ENCODE measurements at regions of chr1 and their contacts with region 1.

Region 1: GRCh38 chr1:21355956-21356355 is 65.7 kb upstream of the ECE1 start:
- DNase-seq: peak; percentile 36 to 37
- H3K4me3 ChIP-seq: no peak overlapping the region
- H3K27ac ChIP-seq: no peak overlapping the region
- H3K4me1 ChIP-seq: no peaks in the 10 kb centered on the region
- H3K27me3 ChIP-seq: no peaks in the 10 kb centered on the region
- CTCF ChIP-seq: no peak

Region 2: GRCh38 chr1:21255278-21255942 is 100.5 kb before region 1 on chr1:
- CTCF ChIA-PET with region 1: no interaction called
- POLR2A ChIA-PET with region 1: interaction called, 12 read pairs
- intact Hi-C with region 1: no loop called
- DNase-seq: peak; percentile 42 to 75
- H3K4me3 ChIP-seq: no peak overlapping the region
- H3K27ac ChIP-seq: no peak overlapping the region
- H3K4me1 ChIP-seq: peaks cover 20% of the 10 kb centered on the region
- H3K27me3 ChIP-seq: no peaks in the 10 kb centered on the region
- CTCF ChIP-seq: peak; percentile 77

Region 3: GRCh38 chr1:21344750-21345443 is 11.1 kb before region 1 on chr1:
- CTCF ChIA-PET with region 1: no interaction called
- POLR2A ChIA-PET with region 1: interaction called, 17 read pairs
- intact Hi-C with region 1: no loop called
- DNase-seq: no peak
- H3K4me3 ChIP-seq: peak overlapping the region; percentile 68
- H3K27ac ChIP-seq: no peak overlapping the region
- H3K4me1 ChIP-seq: peaks cover 23% of the 10 kb centered on the region
- H3K27me3 ChIP-seq: no peaks in the 10 kb centered on the region
- CTCF ChIP-seq: no peak

Region 4: GRCh38 chr1:22527555-22528296 is 1171.8 kb after region 1 on chr1:
- CTCF ChIA-PET with region 1: no interaction called
- POLR2A ChIA-PET with region 1: interaction called, 13 read pairs
- intact Hi-C with region 1: no loop called
- DNase-seq: no peak
- H3K4me3 ChIP-seq: no peak overlapping the region
- H3K27ac ChIP-seq: no peak overlapping the region
- H3K4me1 ChIP-seq: no peaks in the 10 kb centered on the region
- H3K27me3 ChIP-seq: no peaks in the 10 kb centered on the region
- CTCF ChIP-seq: no peak